ENCODE measurements at regions of chr1 and their contacts with region 1.

Region 1: DNA sequence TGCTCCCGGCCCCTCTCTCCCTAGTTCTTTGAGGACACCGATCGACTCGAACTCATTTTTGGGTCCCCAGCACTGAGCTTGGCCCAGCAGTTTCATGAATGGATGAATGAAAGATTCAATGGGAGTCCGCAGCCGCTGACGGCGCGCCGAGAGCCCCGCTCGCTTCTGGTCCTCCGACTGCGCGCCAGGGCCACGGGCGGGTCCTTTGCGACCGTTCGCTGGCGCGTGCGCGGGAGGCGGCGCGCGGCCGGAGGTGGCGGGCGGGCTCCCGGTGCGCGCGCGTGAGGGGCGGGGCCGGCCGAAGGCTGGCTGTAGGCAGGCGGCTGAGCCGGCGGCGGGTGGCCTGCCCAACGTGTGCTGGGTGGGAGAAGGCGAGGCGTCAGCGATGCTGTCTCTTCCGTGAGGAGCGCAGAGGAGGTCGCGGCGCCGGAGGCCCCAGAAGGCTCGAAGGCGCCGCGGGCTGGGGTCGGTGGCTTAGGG is at the start of gene MAST2:
- DNase-seq: peak; percentile 68 to 83 (median 79)
- H3K4me3 ChIP-seq: peak within 1 kb of the TSS in 1 of 2 donors; percentile 50
- H3K4me3 Mint-ChIP-seq: peak within 1 kb of the TSS; percentile 87 to 95 (median 91)
- H3K27ac ChIP-seq: no peak within 1 kb of the TSS
- H3K27ac Mint-ChIP-seq: peak within 1 kb of the TSS; percentile 62 to 93 (median 86)
- H3K4me1 ChIP-seq: peaks cover 16% of the 10 kb centered on the region
- H3K4me1 Mint-ChIP-seq: peaks cover 15 to 32% (median 22%) of the 10 kb centered on the region in 4 donors
- H3K27me3 ChIP-seq: no peaks in the 10 kb centered on the region
- H3K27me3 Mint-ChIP-seq: peaks cover 0 to 2% of the 10 kb centered on the region in 2 donors
- total RNA-seq, gene MAST2: 5.4 to 9.9 TPM

Region 2: GRCh38 chr1:45205910-45206721 is 597.2 kb before region 1 on chr1 and contains the start of gene ZSWIM5:
- CTCF ChIA-PET with region 1: no interaction called
- POLR2A ChIA-PET with region 1: no interaction called
- intact Hi-C with region 1: loop called (anchors 5 kb)
- DNase-seq: peak; percentile 63 to 77 (median 75)
- H3K4me3 ChIP-seq: peak within 1 kb of the TSS; percentile 1 to 58
- H3K4me3 Mint-ChIP-seq: peak within 1 kb of the TSS; percentile 93 to 97 (median 95)
- H3K27ac ChIP-seq: peak within 1 kb of the TSS; percentile 31
- H3K27ac Mint-ChIP-seq: peak within 1 kb of the TSS; percentile 85 to 93 (median 90)
- H3K4me1 ChIP-seq: peaks cover 22% of the 10 kb centered on the region
- H3K4me1 Mint-ChIP-seq: peaks cover 17 to 33% (median 26%) of the 10 kb centered on the region in 4 donors
- H3K27me3 ChIP-seq: no peaks in the 10 kb centered on the region
- H3K27me3 Mint-ChIP-seq: peaks cover 1% of the 10 kb centered on the region in 2 donors
- total RNA-seq, gene ZSWIM5: 3.4 to 3.7 TPM

Region 3: DNA sequence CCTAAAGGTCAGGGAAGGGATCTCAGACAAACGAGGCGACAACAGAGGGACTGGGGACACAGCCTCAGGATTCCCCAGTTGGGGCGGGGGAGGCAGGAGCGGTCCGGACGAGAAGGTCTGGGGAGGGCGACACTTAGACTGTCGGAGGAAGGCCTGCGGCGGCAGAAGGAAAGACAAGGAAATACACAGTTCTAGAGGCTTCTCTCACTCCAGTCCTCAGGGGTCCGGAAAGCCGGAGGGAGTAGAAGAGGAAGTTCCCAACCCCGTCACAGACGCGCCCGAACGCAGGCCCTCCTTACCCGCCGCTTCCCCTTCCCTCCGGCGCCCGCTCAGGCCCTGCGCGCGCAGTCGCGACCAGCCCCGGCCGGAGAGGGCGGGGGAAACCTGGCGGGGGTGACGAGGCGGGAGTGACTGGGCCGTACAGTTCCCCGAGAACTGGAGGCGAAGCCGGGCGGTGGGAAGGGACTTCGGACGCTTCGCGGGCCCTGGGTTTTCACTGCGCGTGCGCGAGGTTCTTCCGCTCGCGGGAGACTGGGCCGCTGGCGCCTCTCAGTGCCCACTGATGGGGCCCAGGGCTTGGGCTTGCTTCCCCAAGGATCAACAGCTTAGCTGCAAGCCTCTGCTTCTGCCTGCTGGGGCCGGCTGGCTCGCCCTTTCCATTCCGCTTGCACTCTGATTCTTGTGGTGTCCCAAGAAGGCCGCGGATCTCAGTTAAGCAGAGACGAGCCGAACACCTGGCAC is 52.9 kb before region 1 on chr1 and contains the start of gene IPP:
- CTCF ChIA-PET with region 1: no interaction called
- POLR2A ChIA-PET with region 1: no interaction called
- intact Hi-C with region 1: loop called (anchors 1 kb)
- DNase-seq: peak; percentile 89 to 92 (median 90)
- H3K4me3 ChIP-seq: peak within 1 kb of the TSS; percentile 84 to 86
- H3K4me3 Mint-ChIP-seq: peak within 1 kb of the TSS; percentile 94 to 100 (median 98)
- H3K27ac ChIP-seq: peak within 1 kb of the TSS; percentile 93
- H3K27ac Mint-ChIP-seq: peak within 1 kb of the TSS; percentile 98 to 100 (median 99)
- H3K4me1 ChIP-seq: peaks cover 22% of the 10 kb centered on the region
- H3K4me1 Mint-ChIP-seq: peaks cover 15 to 44% (median 30%) of the 10 kb centered on the region in 4 donors
- H3K27me3 ChIP-seq: no peaks in the 10 kb centered on the region
- H3K27me3 Mint-ChIP-seq: no peaks in the 10 kb centered on the region
- total RNA-seq, gene IPP: 17.3 to 19.7 TPM

Region 4: DNA sequence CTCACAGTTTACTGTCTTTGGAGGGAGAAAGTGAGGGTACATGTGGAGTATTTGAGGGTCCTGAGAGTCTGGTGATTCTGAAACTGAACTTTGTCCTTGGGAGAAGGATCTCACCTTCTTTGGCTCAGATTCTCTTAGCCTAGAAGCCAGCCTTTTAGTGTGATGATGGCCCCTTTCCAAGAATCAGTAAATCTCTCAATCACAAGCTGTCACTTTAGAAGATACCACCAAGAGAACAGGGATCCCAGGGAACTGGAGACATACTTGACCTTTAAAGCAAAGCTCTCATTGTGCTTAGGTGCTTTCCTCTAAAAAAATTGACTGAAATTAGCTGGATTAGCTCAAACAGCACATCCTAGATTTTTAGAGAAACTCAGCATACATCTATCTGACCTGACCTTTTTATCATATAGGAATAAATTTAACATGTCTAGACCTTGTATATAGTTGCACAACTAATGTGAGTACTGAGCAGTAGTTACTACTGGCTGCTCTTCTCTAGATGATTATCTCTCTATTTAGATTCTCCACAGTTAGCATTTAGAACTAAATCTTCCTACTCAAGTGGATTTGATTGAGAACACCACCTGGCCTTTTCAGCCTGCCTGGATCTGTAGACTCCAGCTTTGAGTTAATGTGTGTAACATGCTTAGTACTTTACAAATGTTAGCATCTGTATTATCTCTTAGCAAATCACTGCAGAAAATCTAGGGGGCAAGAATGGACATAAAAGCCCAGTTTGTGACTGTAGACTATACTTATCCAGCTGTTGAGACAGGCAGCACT is 157.8 kb after region 1 on chr1:
- CTCF ChIA-PET with region 1: no interaction called
- POLR2A ChIA-PET with region 1: no interaction called
- intact Hi-C with region 1: no loop called
- DNase-seq: no peak
- H3K4me3 ChIP-seq: no peak overlapping the region
- H3K4me3 Mint-ChIP-seq: no peak overlapping the region
- H3K27ac ChIP-seq: no peak overlapping the region
- H3K27ac Mint-ChIP-seq: no peak overlapping the region
- H3K4me1 ChIP-seq: no peaks in the 10 kb centered on the region
- H3K4me1 Mint-ChIP-seq: peaks cover 0 to 1% (median 0%) of the 10 kb centered on the region in 4 donors
- H3K27me3 ChIP-seq: no peaks in the 10 kb centered on the region
- H3K27me3 Mint-ChIP-seq: no peaks in the 10 kb centered on the region

Measured in CD4-positive, alpha-beta memory T cell (primary cell).